Naive thymus-derived CD8-positive, alpha-beta T cell (primary cell): ENCODE measurements at regions of chr2 and their contacts with region 1.

Region 1: DNA sequence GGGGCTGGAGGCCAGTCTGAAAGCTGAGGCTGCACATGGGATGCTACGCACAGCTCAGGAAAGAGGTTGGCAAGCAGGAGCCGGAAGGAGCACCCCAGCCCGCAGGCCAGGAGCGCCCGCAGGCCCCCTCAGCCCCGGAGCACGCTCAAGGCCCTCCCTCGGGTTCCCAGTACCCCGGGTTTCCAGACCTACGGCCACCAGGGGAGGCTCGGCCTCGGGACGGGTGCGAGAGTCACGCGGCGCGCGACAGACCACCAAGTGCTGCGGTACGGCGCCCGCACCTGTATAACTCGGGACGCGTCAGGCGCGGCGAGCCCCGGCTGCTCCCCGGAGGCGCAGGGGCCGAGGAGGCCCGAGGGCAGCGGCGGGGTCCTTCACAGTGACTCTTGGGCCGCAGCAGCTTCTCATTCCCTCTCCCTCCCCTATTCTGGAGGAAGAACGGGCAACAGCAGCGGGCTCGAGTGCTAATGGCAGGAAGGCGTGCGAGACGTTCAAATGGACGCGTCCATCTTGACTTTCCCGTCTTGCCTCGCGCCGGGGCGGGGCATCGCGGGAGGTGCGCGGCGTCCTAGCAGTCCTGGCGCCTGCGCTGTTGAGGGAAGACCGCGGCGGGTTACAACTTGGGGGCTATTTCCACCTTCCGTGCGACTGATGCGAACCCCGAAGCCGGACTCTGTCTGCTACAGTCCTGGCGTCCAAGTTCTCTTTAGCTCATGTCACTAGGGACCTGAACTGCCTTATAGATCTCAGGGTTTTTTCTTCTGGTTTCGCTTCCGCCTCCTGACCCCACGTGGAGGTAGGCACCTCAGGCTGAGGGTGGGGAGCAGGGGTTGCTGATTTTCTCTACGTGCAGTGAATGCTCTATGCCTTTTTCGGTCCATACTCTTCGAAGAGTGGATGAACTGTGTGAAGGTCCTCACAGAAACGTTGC is at the start of gene ANAPC1:
- DNase-seq: peak; percentile 77 to 91 (median 82)
- ATAC-seq: peak; percentile 95
- H3K4me3 Mint-ChIP-seq: peak within 1 kb of the TSS; percentile 92 to 99 (median 95)
- H3K27ac Mint-ChIP-seq: peak within 1 kb of the TSS; percentile 92 to 99 (median 98)
- H3K4me1 Mint-ChIP-seq: peaks cover 2 to 19% (median 14%) of the 10 kb centered on the region in 4 donors
- H3K27me3 Mint-ChIP-seq: no peaks in the 10 kb centered on the region
- polyA plus RNA-seq, gene ANAPC1: 29.9 to 32.4 (median 30.8) TPM

Region 2: GRCh38 chr2:111946294-111947114 is 62.6 kb after region 1 on chr2:
- POLR2A ChIA-PET with region 1: no interaction called
- DNase-seq: no peak
- ATAC-seq: no peak
- H3K4me3 Mint-ChIP-seq: no peak overlapping the region
- H3K27ac Mint-ChIP-seq: no peak overlapping the region
- H3K4me1 Mint-ChIP-seq: no peaks in the 10 kb centered on the region
- H3K27me3 Mint-ChIP-seq: peaks cover 0 to 14% (median 7%) of the 10 kb centered on the region in 5 donors

Region 3: DNA sequence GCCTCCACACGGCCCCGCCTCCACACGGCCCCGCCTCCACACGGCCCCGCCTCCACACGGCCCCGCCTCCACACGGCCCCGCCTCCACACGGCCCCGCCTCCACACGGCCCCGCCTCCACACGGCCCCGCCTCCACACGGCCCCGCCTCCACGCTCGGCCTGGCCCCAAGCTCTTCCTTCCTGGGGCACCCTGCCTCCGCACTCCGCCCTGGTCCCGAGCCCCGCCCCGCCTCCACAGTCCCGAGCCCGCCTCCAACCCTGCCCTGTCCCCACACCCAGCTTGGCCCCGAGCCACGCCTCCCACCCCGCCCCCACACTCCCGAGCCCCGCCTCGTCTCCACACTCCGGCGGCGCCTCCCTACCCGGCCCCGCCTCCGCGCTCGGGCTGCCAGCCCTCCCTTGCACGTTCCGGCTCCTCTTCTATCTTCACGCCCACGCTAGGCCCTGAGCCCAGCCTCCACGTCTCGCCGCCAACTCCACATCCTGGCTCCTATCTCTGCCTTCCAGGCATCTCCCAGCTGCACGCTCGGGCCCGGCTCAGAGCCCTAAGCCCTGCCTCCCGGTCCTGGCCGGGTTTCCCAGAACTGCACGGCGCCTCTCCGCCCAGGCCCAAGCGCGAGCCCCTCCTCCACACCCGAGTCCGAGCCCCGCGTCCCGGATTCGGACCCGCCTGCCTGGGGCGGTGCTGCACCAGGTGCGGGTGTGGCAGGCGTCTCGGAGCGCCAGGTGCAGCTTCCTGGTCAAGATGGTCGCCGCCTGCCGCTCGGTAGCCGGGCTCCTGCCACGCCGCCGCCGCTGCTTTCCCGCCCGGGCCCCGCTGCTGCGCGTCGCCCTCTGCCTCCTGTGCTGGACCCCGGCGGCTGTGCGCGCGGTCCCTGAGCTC is 171.2 kb after region 1 on chr2 and contains the start of gene TMEM87B:
- POLR2A ChIA-PET with region 1: interaction called, 27 read pairs
- DNase-seq: peak; percentile 89 to 99 (median 97)
- ATAC-seq: peak; percentile 69 to 75
- H3K4me3 Mint-ChIP-seq: peak within 1 kb of the TSS; percentile 79 to 99 (median 96)
- H3K27ac Mint-ChIP-seq: peak within 1 kb of the TSS; percentile 83 to 99 (median 98)
- H3K4me1 Mint-ChIP-seq: peaks cover 27 to 46% (median 44%) of the 10 kb centered on the region in 4 donors
- H3K27me3 Mint-ChIP-seq: no peaks in the 10 kb centered on the region
- polyA plus RNA-seq, gene TMEM87B: 7.0 to 11.8 (median 9.8) TPM